ENCODE measurements at regions of chr9 and their contacts with region 1.

Region 1: GRCh38 chr9:122190609-122191381 is 31.1 kb downstream of the MORN5 start:
- DNase-seq: peak; percentile 52
- ATAC-seq: peak; percentile 17
- H3K4me3 ChIP-seq: no peak overlapping the region
- H3K27ac ChIP-seq: no peak overlapping the region
- H3K4me1 ChIP-seq: peaks cover 75% of the 10 kb centered on the region
- H3K27me3 ChIP-seq: no peaks in the 10 kb centered on the region
- CTCF ChIP-seq: peak; percentile 33; the same call in 1 of the 2 replicates
- EP300 ChIP-seq: peak in 1 of 2 experiments; percentile 81; a peak in 2 of 4 replicates
- POLR2A ChIP-seq: no peak
- RAD21 ChIP-seq: no peak

Region 2: GRCh38 chr9:122151267-122151828 is 39.4 kb before region 1 on chr9:
- CTCF ChIA-PET with region 1: no interaction called
- POLR2A ChIA-PET with region 1: no interaction called
- in situ Hi-C with region 1: no loop called
- intact Hi-C with region 1: loop called (anchors 5 kb)
- DNase-seq: peak; percentile 44
- ATAC-seq: peak; percentile 79
- H3K4me3 ChIP-seq: no peak overlapping the region
- H3K27ac ChIP-seq: no peak overlapping the region
- H3K4me1 ChIP-seq: peaks cover 32% of the 10 kb centered on the region
- H3K27me3 ChIP-seq: no peaks in the 10 kb centered on the region
- CTCF ChIP-seq: no peak
- EP300 ChIP-seq: no peak
- POLR2A ChIP-seq: no peak
- RAD21 ChIP-seq: no peak

Region 3: GRCh38 chr9:122180651-122181050 is 10.1 kb before region 1 on chr9:
- CTCF ChIA-PET with region 1: no interaction called
- POLR2A ChIA-PET with region 1: interaction called, 15 read pairs
- in situ Hi-C with region 1: no loop called
- intact Hi-C with region 1: no loop called
- DNase-seq: peak; percentile 60
- ATAC-seq: no peak; the same call in 2 of the 3 replicates
- H3K4me3 ChIP-seq: no peak overlapping the region
- H3K27ac ChIP-seq: no peak overlapping the region
- H3K4me1 ChIP-seq: peaks cover 37% of the 10 kb centered on the region
- H3K27me3 ChIP-seq: no peaks in the 10 kb centered on the region
- CTCF ChIP-seq: no peak
- EP300 ChIP-seq: no peak
- POLR2A ChIP-seq: no peak
- RAD21 ChIP-seq: no peak

Region 4: DNA sequence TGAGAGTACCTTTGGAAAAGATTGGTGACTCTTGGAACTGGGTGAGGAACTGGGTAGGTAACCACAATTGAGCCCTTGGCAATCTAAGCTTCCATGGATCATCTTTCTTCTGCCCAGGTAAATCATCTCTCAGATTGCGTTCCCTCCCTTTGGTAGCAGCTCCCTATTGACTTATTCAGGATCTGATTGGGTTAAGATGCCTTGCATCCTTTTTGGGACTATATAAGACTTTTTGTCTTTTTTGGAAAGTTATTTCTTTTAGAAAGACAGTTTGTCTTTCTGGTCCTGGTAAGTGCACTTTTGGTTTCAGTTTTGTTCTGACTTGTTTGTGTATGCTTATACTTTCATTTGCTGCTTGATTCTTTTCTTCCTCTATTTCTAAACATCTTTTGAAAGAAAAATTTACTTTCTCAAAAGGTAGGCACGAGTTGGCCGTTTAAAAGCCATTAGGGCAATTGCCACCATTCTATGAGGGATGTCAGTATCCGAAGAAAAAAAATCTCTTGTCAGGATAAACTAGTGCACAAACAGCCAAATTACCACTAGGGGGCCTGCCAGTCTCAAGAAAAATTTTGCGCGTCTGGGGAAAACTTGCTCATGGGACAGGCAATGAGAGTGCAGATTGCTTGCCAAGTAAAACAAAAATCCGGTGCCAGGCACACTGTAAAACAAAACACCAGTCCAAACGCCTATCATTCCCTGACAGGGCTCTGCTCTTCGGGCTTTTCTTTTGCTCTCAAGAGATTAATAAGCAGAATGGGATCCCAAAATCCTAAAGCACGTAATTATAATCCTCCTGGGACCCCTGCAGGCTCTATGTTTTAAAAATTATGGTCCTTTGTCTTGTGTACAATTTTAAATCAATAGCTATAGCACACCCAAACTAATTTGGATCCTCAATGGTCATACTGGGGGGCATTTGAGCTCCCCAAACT is 274.1 kb after region 1 on chr9:
- CTCF ChIA-PET with region 1: no interaction called
- POLR2A ChIA-PET with region 1: no interaction called
- in situ Hi-C with region 1: no loop called
- intact Hi-C with region 1: no loop called
- DNase-seq: peak; percentile 60
- ATAC-seq: peak; percentile 67
- H3K4me3 ChIP-seq: peak overlapping the region; percentile 64 to 75 (median 66)
- H3K27ac ChIP-seq: no peak overlapping the region
- H3K4me1 ChIP-seq: no peaks in the 10 kb centered on the region
- H3K27me3 ChIP-seq: peaks cover 0 to 6% of the 10 kb centered on the region in 2 experiments; a peak in 1 of 5 replicates
- CTCF ChIP-seq: peak; percentile 80
- EP300 ChIP-seq: no peak
- POLR2A ChIP-seq: no peak
- RAD21 ChIP-seq: peak; percentile 46; the same call in 1 of the 2 replicates

Measured in HepG2 (cell line).